Testis (tissue), 5 donors: ENCODE measurements at regions of chr16 and their contacts with region 1.

Region 1: DNA sequence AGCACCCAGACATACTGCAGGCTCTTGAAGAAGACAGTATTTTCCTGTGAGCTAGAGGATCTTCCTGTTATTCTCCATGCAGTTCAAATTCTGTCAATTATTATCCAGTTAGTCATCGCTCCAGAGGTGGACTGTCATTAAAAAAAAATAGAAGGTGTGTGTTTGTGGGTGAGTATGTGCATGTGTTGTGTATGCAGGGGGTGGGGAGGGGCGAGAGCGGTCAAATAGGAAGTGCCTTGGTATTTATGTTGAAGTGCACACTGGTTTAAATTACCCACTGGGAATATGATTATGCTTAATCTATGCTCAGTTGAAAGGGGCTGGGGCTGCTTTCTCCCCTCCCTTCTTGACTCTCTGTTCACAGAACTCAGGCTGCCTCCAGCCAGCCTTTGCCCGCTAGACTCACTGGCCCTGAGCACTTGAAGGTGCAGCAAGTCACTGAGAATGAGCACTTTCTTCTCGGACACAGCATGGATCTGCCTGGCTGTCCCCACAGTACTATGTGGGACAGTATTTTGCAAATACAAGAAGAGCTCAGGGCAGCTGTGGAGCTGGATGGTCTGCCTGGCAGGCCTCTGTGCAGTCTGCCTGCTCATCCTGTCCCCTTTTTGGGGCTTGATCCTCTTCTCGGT is at the start of gene HSD17B2:
- DNase-seq: no peak
- H3K4me3 ChIP-seq: no peak within 1 kb of the TSS
- H3K27ac ChIP-seq: no peak within 1 kb of the TSS
- H3K4me1 ChIP-seq: no peaks in the 10 kb centered on the region
- H3K27me3 ChIP-seq: no peaks in the 10 kb centered on the region
- CTCF ChIP-seq: no peak
- POLR2A ChIP-seq: no peak
- total RNA-seq, gene HSD17B2: 0.71 TPM in 1 of 2 donors, not detected in the other

Region 2: DNA sequence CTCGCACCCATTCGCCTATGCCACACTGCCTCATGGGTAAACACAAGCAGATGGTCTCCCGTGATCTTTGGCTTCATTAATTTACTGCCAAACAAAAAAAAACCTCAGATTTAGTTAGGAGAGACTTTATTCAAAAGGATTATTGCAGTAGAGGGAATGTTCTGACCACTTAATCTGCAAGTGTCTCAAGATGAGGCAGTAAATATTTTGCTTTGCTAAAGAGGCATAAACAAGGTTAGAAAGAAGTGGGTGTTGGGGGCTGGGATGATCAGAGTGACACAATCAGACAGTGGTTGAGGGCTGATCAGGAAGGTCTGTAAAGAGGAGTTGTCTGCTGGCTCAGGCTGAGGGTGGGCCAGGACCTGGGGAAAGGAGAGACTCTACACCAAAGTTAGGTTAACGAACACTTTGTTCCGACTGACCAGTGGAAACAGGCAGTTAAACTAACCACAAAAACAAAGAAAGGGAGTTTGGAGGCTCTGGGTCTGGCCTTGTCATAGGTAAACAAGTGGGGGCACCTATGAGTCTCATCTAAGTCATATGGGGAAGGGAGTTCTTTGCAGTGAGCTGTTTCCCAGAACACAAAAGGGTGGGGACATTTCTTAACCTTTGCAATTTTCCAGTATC is 28.5 kb after region 1 on chr16:
- intact Hi-C with region 1: loop called (anchors 2 kb)
- DNase-seq: no peak
- H3K4me3 ChIP-seq: no peak overlapping the region
- H3K27ac ChIP-seq: no peak overlapping the region
- H3K4me1 ChIP-seq: no peaks in the 10 kb centered on the region
- H3K27me3 ChIP-seq: no peaks in the 10 kb centered on the region
- CTCF ChIP-seq: no peak
- POLR2A ChIP-seq: no peak

Region 3: GRCh38 chr16:82146957-82147356 is 111.9 kb after region 1 on chr16:
- intact Hi-C with region 1: no loop called
- DNase-seq: no peak
- H3K4me3 ChIP-seq: no peak overlapping the region
- H3K27ac ChIP-seq: no peak overlapping the region
- H3K4me1 ChIP-seq: no peaks in the 10 kb centered on the region
- H3K27me3 ChIP-seq: no peaks in the 10 kb centered on the region
- CTCF ChIP-seq: no peak
- POLR2A ChIP-seq: no peak